Breast epithelium (tissue), 4 donors: ENCODE measurements at regions of chr10 and their contacts with region 1.

Region 1: DNA sequence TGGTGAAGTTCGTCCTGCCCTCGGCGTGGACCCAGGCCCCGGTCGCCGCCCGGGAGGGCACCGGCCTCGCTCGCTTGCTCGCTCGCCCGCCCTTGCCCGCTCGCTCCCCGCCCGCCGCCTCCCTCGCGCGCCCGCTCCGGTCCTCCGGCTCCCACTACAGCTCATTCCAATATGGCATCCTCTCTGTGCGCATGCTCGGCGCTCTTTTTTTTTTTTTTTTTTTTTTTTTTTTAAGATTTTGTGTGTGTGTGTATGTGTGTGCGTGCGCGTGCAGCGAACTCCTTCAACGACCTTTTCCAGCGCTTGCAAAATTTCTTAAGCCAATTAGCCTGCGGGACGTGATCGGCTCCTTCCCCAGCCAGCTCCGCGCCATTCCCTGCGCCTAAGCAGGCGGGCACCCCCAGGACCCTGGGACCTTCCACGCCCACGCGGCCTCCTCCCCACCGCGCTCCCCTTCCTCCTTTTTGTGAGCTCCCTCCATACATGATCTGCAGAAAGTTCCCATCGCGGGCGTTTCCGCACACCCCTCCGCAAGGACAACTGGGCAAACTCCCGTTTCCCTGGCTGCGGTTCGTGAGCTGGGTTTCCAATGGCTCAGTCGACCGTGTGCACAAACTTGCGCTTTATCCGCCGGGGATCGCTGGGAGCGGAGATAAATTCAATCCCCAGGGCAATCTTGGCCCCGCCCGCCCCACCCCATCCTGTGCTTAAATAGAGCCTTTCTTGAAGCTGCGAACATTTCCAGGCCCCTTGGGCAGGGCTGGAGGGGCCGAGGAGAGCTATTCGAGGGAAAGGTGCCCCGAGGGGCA is at the start of gene SFMBT2:
- DNase-seq: peak in 1 of 2 donors; percentile 61
- H3K4me3 ChIP-seq: peak within 1 kb of the TSS; percentile 65 to 90 (median 78)
- H3K27ac ChIP-seq: peak within 1 kb of the TSS; percentile 75 to 93
- H3K4me1 ChIP-seq: peaks cover 8 to 12% of the 10 kb centered on the region in 2 donors
- H3K27me3 ChIP-seq: peaks cover 0 to 17% of the 10 kb centered on the region in 2 donors
- CTCF ChIP-seq: no peak
- POLR2A ChIP-seq: no peak
- total RNA-seq, gene SFMBT2: 3.5 to 32.8 (median 22.8) TPM

Region 2: DNA sequence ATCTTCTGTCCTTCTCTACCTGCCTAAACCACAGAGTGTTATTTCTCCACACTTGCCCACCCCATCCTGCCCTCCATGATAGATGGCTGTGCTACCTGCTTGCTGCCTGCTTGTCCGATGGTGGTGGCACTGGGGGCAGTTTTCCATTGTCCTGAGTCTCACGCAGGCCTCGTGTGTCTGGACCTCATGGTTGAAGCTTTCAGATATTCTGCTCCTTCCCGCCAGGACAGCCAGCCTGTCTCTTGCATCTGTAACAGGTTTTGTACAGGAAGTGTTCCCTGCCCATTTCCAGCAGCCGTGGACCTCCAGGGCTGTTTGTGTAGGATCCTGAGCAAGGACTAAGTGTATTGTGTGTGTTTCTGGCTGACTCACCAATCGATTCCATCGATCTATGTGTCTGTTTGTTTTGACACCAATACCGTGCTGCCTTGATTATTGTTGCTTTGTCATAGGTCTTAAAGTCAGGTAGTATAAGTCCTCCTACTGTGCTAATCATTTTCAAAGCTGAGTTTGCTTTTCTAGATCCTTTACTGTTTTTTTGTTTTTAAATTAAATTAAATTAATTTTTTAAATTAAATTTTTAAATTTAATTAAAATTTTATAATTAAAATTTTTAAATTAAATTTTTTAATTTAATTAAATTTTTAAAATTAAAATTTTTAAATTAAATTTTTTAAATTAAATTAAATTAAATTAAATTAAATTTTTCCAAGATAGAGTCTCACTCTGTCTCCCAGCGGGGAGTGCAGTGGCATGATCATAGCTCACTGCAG is 1442.2 kb before region 1 on chr10:
- intact Hi-C with region 1: loop called (anchors 5 kb)
- DNase-seq: peak; percentile 11 to 43
- H3K4me3 ChIP-seq: no peak overlapping the region
- H3K27ac ChIP-seq: peak overlapping the region in 1 of 2 donors; percentile 4
- H3K4me1 ChIP-seq: peaks cover 0 to 14% of the 10 kb centered on the region in 2 donors
- H3K27me3 ChIP-seq: no peaks in the 10 kb centered on the region
- CTCF ChIP-seq: no peak
- POLR2A ChIP-seq: no peak

Region 3: GRCh38 chr10:7027913-7028808 is 382.9 kb before region 1 on chr10:
- intact Hi-C with region 1: no loop called
- DNase-seq: no peak
- H3K4me3 ChIP-seq: no peak overlapping the region
- H3K27ac ChIP-seq: no peak overlapping the region
- H3K4me1 ChIP-seq: no peaks in the 10 kb centered on the region
- H3K27me3 ChIP-seq: no peaks in the 10 kb centered on the region
- CTCF ChIP-seq: no peak
- POLR2A ChIP-seq: no peak

Region 4: DNA sequence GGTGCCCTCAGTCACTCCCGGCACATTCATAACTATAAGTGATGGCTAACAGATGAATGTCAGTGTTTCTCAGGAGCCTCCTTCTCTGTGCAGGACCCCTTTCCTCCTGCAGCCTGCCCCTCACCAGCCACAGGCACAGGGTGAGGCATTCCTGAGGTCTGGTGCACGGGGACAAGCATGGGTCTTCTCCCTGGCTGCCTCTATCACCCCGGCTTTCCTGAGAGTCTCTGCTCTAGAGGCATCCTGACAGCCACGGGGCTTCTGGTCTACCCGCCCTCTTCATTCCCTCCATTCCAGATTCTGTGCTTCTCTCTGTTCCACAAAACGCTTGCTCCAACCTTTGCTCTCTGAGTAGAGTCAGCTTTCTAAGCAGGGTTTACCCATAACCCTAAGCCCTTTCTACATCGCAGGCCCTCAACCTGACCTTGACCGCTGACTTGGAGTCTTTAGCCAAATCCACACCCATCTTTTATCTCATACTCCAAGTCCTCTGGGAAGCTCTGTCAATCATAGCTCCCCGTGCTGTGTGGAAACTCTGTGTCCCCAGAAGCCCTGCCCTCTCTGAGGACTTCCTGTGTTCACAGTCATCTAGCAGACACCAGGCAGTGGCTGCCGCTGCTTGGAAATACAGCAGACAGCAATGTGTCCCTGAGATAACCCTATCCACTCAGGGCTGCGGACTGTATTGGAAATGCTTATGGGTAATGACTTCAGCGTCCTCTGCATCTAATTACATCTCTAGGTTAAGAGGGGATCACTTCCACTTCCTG is 159.2 kb before region 1 on chr10:
- intact Hi-C with region 1: loop called (anchors 5 kb)
- DNase-seq: no peak
- H3K4me3 ChIP-seq: no peak overlapping the region
- H3K27ac ChIP-seq: no peak overlapping the region
- H3K4me1 ChIP-seq: no peaks in the 10 kb centered on the region
- H3K27me3 ChIP-seq: no peaks in the 10 kb centered on the region
- CTCF ChIP-seq: no peak
- POLR2A ChIP-seq: no peak

Region 5: GRCh38 chr10:7362471-7362870 is 48.6 kb before region 1 on chr10:
- intact Hi-C with region 1: loop called (anchors 2 kb)
- DNase-seq: no peak
- H3K4me3 ChIP-seq: no peak overlapping the region
- H3K27ac ChIP-seq: no peak overlapping the region
- H3K4me1 ChIP-seq: no peaks in the 10 kb centered on the region
- H3K27me3 ChIP-seq: no peaks in the 10 kb centered on the region
- CTCF ChIP-seq: no peak
- POLR2A ChIP-seq: no peak

Region 6: DNA sequence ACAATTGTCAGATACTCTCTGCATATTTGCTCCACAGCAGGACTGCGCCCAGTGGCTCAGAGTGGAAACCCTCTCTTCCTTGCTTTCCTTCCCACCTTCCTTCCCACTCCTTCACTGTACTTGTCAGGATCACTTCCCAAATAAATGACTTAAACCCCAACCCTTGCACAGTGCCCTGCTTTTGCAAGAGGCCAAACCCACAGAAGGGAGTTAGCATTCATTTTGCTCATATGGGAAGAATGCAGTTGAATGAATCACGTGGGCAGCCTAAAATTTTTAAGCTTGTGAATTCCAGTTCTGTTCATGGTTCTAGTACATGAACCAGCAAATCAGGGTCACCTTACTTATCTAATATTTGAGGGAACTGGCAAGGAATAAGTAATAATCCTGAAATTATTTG is 47.5 kb after region 1 on chr10:
- intact Hi-C with region 1: no loop called
- DNase-seq: no peak
- H3K4me3 ChIP-seq: no peak overlapping the region
- H3K27ac ChIP-seq: no peak overlapping the region
- H3K4me1 ChIP-seq: no peaks in the 10 kb centered on the region
- H3K27me3 ChIP-seq: no peaks in the 10 kb centered on the region
- CTCF ChIP-seq: no peak
- POLR2A ChIP-seq: no peak